Posterior vena cava (tissue), 2 donors: ENCODE measurements at regions of chr11 and their contacts with region 1.

Region 1: GRCh38 chr11:44977476-44977984 is 26.8 kb upstream of the TP53I11 start:
- DNase-seq: no peak

Region 2: GRCh38 chr11:45021692-45022141 is 44.2 kb after region 1 on chr11:
- intact Hi-C with region 1: no loop called
- DNase-seq: peak; percentile 93

Region 3: DNA sequence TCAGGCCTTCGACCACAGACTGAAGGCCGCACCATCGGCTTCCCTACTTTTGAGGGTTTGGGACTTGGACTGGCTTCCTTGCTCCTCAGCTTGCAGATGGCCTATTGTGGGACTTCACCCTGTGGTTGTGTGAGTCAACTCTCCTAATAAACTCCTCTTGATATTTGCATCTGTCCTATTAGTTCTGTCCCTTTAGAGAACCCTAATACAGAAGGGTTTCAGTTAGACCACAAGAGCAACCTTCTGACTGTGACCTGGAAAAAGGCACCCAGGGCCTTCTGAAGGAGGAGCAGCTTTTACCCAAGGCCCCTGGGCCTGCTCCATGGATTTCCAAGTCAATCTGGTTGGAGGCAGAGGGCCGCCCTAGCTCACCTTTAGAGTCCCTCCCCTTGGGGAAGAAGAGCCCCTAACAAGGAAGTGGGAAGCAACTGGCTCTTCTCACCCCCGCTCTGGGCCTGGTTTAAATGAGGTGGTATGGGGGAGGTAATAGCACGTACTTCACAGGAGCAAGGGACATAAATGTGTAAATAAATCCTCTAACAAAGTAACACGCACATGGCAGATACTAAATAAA is 699.1 kb after region 1 on chr11:
- intact Hi-C with region 1: loop called in 1 of 2 experiments (anchors 10 kb)
- DNase-seq: peak; percentile 55

Region 4: DNA sequence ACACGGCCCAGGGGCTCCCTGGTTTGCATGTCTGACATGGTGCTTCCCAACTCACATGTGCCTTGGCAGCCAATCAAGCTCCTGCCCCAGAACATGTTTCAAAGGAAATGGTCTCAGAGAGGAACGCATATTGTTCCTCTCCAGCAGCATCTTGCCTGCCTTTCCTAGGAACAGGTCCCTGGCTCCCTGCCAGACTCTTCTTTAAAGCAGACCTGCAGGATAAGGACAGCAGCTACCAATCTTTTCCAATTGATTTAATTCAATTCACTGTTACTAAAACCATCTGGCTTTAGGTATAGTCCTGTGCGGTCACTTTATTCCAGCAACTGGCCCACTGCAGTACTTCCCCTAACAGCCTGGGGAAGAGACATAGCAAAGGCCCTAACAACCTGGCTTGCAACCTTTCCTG is 1536.4 kb after region 1 on chr11:
- intact Hi-C with region 1: loop called in 1 of 2 experiments (anchors 10 kb)
- DNase-seq: peak; percentile 81